ENCODE measurements at regions of chr1 and their contacts with region 1.

Region 1: GRCh38 chr1:212608209-212608955 is at the start of gene ATF3:
- DNase-seq: peak; percentile 90
- H3K4me3 Mint-ChIP-seq: peak within 1 kb of the TSS; percentile 95
- H3K27ac Mint-ChIP-seq: peak within 1 kb of the TSS; percentile 97
- H3K4me1 Mint-ChIP-seq: peaks cover 63% of the 10 kb centered on the region
- H3K27me3 Mint-ChIP-seq: peaks cover 36% of the 10 kb centered on the region
- total RNA-seq, gene ATF3: 23.0 and 23.3 TPM in 2 replicates

Region 2: DNA sequence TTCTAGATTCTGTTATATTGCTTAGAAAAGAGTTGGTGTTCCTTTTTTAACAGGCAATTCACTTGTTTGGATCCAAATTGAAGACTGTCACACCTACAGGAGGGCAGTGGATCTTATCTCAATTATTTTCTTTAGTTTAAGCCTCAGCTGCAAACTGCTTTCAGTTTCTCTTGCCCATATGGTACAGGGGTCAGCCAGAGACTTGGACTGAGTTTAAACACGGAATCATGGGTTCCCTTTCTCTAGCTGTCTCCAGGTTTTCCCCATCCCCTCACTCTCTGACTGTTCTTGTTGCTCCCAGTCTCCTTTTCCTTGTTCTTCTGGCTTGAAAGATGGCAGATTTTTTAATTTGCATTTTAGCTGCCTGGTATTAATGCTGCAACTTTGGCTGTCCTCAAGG is 554.4 kb before region 1 on chr1:
- intact Hi-C with region 1: no loop called
- DNase-seq: no peak
- H3K4me3 Mint-ChIP-seq: no peak overlapping the region
- H3K27ac Mint-ChIP-seq: no peak overlapping the region
- H3K4me1 Mint-ChIP-seq: no peaks in the 10 kb centered on the region
- H3K27me3 Mint-ChIP-seq: no peaks in the 10 kb centered on the region

Region 3: DNA sequence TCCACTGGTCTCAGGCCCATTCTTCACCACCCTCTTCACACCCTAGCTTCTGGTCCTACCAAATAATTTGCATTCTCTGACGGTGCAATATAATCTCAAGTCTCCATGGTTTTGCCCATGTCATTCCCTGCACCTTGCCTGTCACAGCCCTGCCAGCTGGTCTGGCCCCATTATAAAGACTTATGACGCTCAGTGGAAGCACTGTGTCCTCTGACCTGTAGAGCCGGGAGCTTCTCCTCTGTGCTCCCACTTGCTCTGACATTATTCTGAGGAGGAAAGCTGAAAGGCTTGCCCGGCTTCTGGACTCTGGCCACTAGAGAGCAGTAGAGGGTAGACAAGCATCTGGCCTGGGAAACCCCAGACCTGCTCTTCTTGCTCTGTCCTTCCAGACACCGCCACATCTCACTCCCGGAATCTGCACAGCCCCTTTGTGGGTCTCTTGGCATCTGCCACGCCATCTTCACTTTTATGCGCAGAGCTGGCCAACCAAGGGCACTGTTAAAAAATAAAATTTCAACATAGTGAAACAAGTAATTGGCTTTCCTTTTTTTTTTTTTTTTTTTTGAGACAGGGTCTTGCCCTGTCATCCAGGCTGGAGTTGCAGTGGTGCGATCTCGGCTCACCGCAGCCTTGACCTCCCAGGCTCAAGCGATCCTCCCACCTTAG is 131.2 kb before region 1 on chr1:
- intact Hi-C with region 1: loop called (anchors 1 kb)
- DNase-seq: peak; percentile 71
- H3K4me3 Mint-ChIP-seq: no peak overlapping the region
- H3K27ac Mint-ChIP-seq: no peak overlapping the region
- H3K4me1 Mint-ChIP-seq: peaks cover 15% of the 10 kb centered on the region
- H3K27me3 Mint-ChIP-seq: peaks cover 9% of the 10 kb centered on the region

Region 4: DNA sequence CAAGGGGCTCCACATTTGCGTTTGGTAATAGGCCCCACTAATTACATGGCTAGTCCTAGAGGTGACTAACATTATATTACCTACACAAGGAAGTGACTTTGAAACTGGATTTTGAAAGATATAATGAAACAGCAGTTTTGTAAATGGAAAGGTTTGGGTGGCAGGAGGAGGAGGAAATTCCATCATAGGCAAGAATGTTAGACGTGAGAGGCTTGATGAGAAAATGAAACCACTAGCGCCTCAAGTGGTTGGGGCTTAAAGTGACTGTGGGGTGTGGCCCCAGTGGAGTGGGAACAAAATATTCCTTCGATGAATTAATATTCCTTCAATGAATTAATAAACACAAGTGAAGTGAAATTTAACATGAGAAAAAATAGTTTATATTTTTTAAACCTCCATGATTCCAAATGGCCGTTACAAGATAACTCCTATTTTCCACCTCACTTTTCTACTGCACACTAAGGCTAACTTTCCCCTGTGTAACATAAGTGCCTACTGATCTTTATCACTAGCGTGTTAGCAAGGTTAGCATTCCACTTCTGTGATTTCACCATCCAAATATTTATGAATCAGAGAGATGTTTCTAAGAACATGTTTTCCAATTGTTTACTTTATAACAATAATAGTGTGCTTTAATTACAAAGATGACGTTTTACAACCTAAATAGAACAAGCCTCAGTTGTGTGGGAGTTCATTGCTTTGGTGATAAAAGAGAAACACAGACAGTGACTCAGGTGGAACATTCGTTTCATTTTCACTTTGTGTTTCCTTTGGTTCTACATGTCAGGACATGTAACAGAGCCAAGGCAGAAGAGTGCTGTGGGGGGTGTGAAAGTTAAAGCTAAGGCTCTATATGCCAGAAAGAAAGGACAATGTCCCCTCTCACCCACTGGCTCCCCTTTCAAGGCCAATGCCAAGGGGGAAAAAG is 12.3 kb before region 1 on chr1:
- intact Hi-C with region 1: loop called (anchors 1 kb)
- DNase-seq: peak; percentile 64
- H3K4me3 Mint-ChIP-seq: peak overlapping the region; percentile 68
- H3K27ac Mint-ChIP-seq: peak overlapping the region; percentile 96
- H3K4me1 Mint-ChIP-seq: peaks cover 27% of the 10 kb centered on the region
- H3K27me3 Mint-ChIP-seq: peaks cover 10% of the 10 kb centered on the region

Region 5: GRCh38 chr1:212678456-212679410 is 70.4 kb after region 1 on chr1:
- intact Hi-C with region 1: loop called (anchors 2 kb)
- DNase-seq: no peak
- H3K4me3 Mint-ChIP-seq: no peak overlapping the region
- H3K27ac Mint-ChIP-seq: peak overlapping the region; percentile 75
- H3K4me1 Mint-ChIP-seq: peaks cover 55% of the 10 kb centered on the region
- H3K27me3 Mint-ChIP-seq: no peaks in the 10 kb centered on the region

Region 6: GRCh38 chr1:212791676-212792395 is 183.5 kb after region 1 on chr1 and contains the starts of genes NSL1 and TATDN3:
- intact Hi-C with region 1: loop called (anchors 2 kb)
- DNase-seq: peak; percentile 93
- H3K4me3 Mint-ChIP-seq: peak within 1 kb of the TSS; percentile 99
- H3K27ac Mint-ChIP-seq: peak within 1 kb of the TSS; percentile 98
- H3K4me1 Mint-ChIP-seq: peaks cover 30% of the 10 kb centered on the region
- H3K27me3 Mint-ChIP-seq: no peaks in the 10 kb centered on the region
- total RNA-seq, gene NSL1: 40.2 and 44.7 TPM in 2 replicates
- total RNA-seq, gene TATDN3: 14.4 and 18.5 TPM in 2 replicates